ENCODE measurements at regions of chr9 and their contacts with region 1.

Region 1: DNA sequence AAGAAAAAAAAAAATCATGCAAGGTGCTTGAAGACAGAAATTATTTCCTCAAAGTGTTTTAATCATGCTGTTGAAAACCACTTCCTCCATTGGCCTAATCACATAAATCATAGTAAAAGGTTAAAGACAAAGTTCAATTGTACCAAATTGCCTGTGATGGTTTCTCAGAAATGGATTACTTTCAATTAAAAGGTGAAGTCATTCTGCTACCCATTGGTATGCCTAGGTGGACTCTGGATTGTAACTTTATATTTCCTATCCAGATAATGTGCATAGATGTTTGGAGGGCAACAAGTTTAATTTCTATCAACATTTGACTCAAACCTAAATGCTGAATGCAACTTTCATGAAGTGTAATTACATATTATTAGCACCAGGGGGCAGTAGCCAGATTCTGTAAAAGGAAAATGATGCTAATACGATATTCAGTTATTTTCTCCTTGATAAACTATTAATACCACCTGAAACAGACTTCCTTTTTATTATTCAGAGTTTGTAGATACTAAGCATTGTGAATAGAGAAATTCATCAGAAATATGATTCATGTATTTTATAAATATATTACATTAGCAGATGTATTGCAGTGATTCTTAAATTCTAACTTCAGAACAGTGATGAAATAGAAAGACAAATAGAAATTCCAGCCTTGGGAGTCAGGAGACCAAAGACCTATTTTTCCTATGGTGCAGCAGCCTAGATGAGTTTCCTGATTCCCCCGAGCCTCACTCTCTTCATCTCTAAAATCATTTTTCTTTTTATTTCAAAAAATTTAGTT is 148.2 kb downstream of the CAAP1 start:
- DNase-seq: peak; percentile 38
- H3K4me3 ChIP-seq: no peak overlapping the region
- H3K27ac ChIP-seq: no peak overlapping the region
- H3K4me1 ChIP-seq: no peaks in the 10 kb centered on the region
- H3K27me3 ChIP-seq: peaks cover 4 to 22% of the 10 kb centered on the region in 2 experiments
- CTCF ChIP-seq: peak; percentile 37 to 45
- POLR2A ChIP-seq: no peak

Region 2: DNA sequence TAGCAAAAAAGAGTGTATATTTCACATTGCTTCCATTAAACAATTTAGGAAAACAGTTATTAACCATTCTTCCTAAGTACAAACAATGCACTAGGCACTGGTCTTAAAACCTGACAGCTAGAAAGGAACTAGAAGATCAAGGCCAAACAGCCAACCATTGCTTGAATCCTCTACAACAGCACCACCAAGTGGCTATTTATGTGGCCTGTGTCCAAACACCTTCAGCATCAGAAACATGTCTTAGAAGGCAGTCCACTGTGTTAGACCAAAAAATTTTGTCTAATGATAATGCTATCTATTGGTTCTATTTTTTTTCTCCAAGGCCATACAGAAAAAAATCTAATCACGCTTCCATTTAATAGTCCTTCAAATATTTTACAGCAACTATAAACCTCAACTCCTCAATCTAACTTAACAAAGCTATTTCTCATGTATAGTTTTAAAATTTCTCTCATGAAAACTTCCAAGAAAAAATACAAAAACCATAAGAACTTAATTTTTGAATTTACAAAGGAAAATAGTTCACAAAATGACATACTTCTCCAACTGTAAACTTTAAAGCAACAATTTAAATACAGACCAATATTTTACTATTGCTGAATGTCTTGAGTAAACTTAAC is 112.1 kb after region 1 on chr9:
- CTCF ChIA-PET with region 1: interaction called, 7 read pairs
- POLR2A ChIA-PET with region 1: no interaction called
- dilution Hi-C with region 1: no loop called
- intact Hi-C with region 1: loop called (anchors 1 kb)
- DNase-seq: peak; percentile 21
- H3K4me3 ChIP-seq: no peak overlapping the region
- H3K27ac ChIP-seq: no peak overlapping the region
- H3K4me1 ChIP-seq: no peaks in the 10 kb centered on the region
- H3K27me3 ChIP-seq: no peaks in the 10 kb centered on the region
- CTCF ChIP-seq: peak; percentile 43 to 48
- POLR2A ChIP-seq: no peak

Region 3: GRCh38 chr9:26975693-26976059 is 231.3 kb after region 1 on chr9:
- CTCF ChIA-PET with region 1: interaction called, 7 read pairs
- POLR2A ChIA-PET with region 1: no interaction called
- dilution Hi-C with region 1: no loop called
- intact Hi-C with region 1: loop called (anchors 1 kb)
- DNase-seq: peak; percentile 42
- H3K4me3 ChIP-seq: no peak overlapping the region
- H3K27ac ChIP-seq: no peak overlapping the region
- H3K4me1 ChIP-seq: no peaks in the 10 kb centered on the region
- H3K27me3 ChIP-seq: no peaks in the 10 kb centered on the region
- CTCF ChIP-seq: peak; percentile 34 to 51
- POLR2A ChIP-seq: no peak